Activated CD4-positive, alpha-beta T cell treated with anti-CD3 and anti-CD28 coated beads for 36 hours (primary cell): ENCODE measurements at regions of chr7 and their contacts with region 1.

Region 1: GRCh38 chr7:130961128-130961601 is 227.2 kb upstream of the KLF14 start:
- DNase-seq: peak; percentile 88
- ATAC-seq: peak; percentile 86
- H3K4me3 Mint-ChIP-seq: no peak overlapping the region
- H3K27ac Mint-ChIP-seq: peak overlapping the region; percentile 100
- H3K4me1 Mint-ChIP-seq: peaks cover 40% of the 10 kb centered on the region
- H3K27me3 Mint-ChIP-seq: no peaks in the 10 kb centered on the region

Region 2: DNA sequence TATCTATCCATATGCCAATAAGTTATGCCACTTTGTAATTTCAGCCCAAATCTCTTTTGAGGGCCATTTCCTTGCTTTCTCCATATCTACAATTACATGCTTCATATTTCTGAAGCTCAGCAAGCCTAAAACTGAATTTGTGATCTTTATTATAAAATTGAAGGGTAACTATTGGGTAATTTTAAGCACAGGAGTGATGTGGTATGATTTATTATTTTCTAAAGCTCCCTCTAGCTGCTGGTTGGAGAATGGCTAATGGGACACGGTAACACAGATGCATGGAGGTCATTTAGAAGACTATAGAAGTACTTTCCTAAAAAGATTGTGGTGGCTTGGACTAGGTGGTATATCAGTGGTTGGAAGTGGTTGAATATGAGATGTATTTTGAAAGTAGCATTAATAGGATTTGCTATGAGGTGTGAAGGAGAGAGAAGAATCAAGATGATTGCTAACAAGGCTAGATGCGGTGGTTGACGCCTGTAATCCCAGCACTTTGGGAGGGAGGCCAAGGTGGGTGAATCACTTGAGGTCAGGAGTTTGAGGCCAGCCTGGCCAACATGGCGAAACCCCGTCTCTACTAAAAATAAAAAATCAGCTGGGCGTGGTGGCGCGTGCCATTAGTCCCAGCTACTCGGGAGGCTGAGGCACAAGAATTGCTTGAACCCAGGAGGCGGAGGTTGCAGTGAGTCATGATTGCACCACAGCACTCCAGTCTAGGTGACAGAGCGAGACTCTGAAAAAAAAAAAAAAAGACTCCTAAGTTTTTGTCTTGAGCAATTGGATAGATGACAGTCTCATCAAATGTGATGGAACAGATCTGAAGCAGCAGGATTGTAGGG is 876.9 kb before region 1 on chr7:
- CTCF ChIA-PET with region 1: no interaction called
- POLR2A ChIA-PET with region 1: no interaction called
- intact Hi-C with region 1: no loop called
- DNase-seq: no peak
- ATAC-seq: no peak
- H3K4me3 Mint-ChIP-seq: no peak overlapping the region
- H3K27ac Mint-ChIP-seq: no peak overlapping the region
- H3K4me1 Mint-ChIP-seq: peaks cover 21% of the 10 kb centered on the region
- H3K27me3 Mint-ChIP-seq: no peaks in the 10 kb centered on the region

Region 3: DNA sequence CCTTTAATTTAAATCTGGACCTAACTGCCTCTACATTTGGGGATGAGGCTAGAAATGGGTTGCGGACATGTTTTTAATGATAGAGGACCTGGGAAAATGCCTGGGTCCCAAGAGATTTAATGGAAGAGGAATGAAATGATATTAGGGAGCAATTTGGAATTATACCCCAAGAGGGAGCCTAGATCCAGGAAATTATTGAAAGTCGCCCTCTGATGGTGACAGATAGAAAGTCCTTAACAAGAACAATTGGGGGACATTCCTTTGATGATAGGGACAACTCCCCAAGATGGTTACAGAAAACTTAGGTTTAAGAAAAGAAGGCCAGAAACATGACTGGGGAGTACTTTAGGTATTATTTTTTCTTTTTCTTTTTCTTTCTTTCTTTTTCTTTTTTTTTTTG is 265.3 kb before region 1 on chr7:
- CTCF ChIA-PET with region 1: no interaction called
- POLR2A ChIA-PET with region 1: no interaction called
- intact Hi-C with region 1: no loop called
- DNase-seq: no peak
- ATAC-seq: no peak
- H3K4me3 Mint-ChIP-seq: no peak overlapping the region
- H3K27ac Mint-ChIP-seq: no peak overlapping the region
- H3K4me1 Mint-ChIP-seq: no peaks in the 10 kb centered on the region
- H3K27me3 Mint-ChIP-seq: peaks cover 4% of the 10 kb centered on the region

Region 4: GRCh38 chr7:130896898-130897514 is 64.2 kb before region 1 on chr7:
- CTCF ChIA-PET with region 1: interaction called, 27 read pairs
- POLR2A ChIA-PET with region 1: interaction called, 16 read pairs
- intact Hi-C with region 1: no loop called
- DNase-seq: peak; percentile 87
- ATAC-seq: peak; percentile 56
- H3K4me3 Mint-ChIP-seq: peak overlapping the region; percentile 22
- H3K27ac Mint-ChIP-seq: peak overlapping the region; percentile 88
- H3K4me1 Mint-ChIP-seq: peaks cover 94% of the 10 kb centered on the region
- H3K27me3 Mint-ChIP-seq: no peaks in the 10 kb centered on the region

Region 5: DNA sequence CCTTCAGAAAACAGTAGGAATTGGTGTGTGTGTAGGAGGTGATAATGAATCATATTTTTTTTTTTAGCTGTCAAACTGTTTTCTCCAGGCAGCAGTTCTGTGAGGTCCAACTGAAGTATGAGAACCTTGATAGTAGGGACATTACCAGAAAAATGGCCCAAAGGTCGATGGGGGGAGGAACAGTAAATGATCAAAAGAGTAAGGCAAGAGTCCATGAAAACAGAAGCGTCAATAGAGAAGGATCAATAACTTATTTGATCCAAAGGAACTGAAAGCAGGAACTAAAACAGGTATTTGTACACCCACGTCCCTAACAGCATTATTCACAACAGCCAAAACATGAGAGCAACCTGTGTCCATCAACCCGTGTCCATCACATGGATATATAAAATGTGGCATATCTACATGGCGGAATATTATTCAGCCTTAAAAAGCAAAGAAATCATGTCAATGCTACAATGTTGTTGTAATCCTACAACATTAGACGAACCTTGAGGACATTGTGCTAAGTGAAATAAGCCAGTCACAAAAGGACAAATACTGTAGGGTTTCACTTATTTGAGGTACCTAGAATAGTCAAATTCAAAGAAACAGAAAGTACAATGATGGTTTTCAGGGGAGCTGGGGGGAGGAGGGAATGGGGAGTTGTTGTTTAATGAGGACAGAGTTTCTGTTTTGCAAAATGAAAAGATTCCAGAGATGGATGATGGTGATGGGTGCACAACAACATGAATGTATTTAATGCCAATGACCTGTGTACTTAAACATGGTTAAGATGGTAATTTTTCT is 13.2 kb before region 1 on chr7:
- CTCF ChIA-PET with region 1: interaction called, 13 read pairs
- POLR2A ChIA-PET with region 1: interaction called, 29 read pairs
- intact Hi-C with region 1: loop called in 1 of 2 experiments (anchors 1 kb)
- DNase-seq: no peak
- ATAC-seq: peak; percentile 12
- H3K4me3 Mint-ChIP-seq: peak overlapping the region; percentile 58
- H3K27ac Mint-ChIP-seq: peak overlapping the region; percentile 85
- H3K4me1 Mint-ChIP-seq: peaks cover 60% of the 10 kb centered on the region
- H3K27me3 Mint-ChIP-seq: no peaks in the 10 kb centered on the region

Region 6: GRCh38 chr7:131007394-131008330 is 46.5 kb after region 1 on chr7:
- CTCF ChIA-PET with region 1: interaction called, 14 read pairs
- POLR2A ChIA-PET with region 1: interaction called, 27 read pairs
- intact Hi-C with region 1: loop called (anchors 1 kb)
- DNase-seq: peak; percentile 80
- ATAC-seq: peak; percentile 27
- H3K4me3 Mint-ChIP-seq: peak overlapping the region; percentile 68
- H3K27ac Mint-ChIP-seq: peak overlapping the region; percentile 96
- H3K4me1 Mint-ChIP-seq: peaks cover 90% of the 10 kb centered on the region
- H3K27me3 Mint-ChIP-seq: no peaks in the 10 kb centered on the region

Region 7: GRCh38 chr7:131071786-131072504 is 110.8 kb after region 1 on chr7:
- CTCF ChIA-PET with region 1: no interaction called
- POLR2A ChIA-PET with region 1: interaction called, 11 read pairs
- intact Hi-C with region 1: no loop called
- DNase-seq: peak; percentile 22
- ATAC-seq: no peak
- H3K4me3 Mint-ChIP-seq: no peak overlapping the region
- H3K27ac Mint-ChIP-seq: peak overlapping the region; percentile 70
- H3K4me1 Mint-ChIP-seq: peaks cover 78% of the 10 kb centered on the region
- H3K27me3 Mint-ChIP-seq: no peaks in the 10 kb centered on the region

Region 8: DNA sequence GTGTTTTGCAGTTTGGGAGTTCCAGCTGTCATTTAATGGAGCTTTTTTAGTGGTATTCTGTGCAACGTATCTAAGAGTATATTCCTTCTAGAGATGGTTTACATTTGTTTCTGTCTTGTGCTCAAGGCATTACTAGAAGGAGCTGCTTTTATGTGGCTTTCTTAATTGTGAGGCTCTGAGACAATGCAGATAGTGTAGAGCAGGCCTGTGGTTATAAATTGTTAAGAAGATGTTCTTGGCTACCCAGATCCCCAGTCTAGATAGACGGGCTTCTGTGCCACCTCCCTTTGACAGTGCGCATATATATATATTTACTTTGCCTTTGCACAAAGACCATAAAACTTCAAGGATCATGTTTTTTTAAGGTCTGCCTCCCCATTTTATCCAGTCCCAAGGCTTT is 756.0 kb after region 1 on chr7:
- CTCF ChIA-PET with region 1: no interaction called
- POLR2A ChIA-PET with region 1: no interaction called
- intact Hi-C with region 1: no loop called
- DNase-seq: no peak
- ATAC-seq: no peak
- H3K4me3 Mint-ChIP-seq: no peak overlapping the region
- H3K27ac Mint-ChIP-seq: no peak overlapping the region
- H3K4me1 Mint-ChIP-seq: no peaks in the 10 kb centered on the region
- H3K27me3 Mint-ChIP-seq: peaks cover 4% of the 10 kb centered on the region